ENCODE measurements at regions of chr6 and their contacts with region 1.

Region 1: GRCh38 chr6:132530293-132530974 is 7.6 kb upstream of the TAAR9 start:
- DNase-seq: peak; percentile 38
- H3K4me3 ChIP-seq: peak overlapping the region; percentile 30 to 45 (median 39)
- H3K27ac ChIP-seq: no peak overlapping the region
- H3K4me1 ChIP-seq: no peaks in the 10 kb centered on the region
- H3K27me3 ChIP-seq: no peaks in the 10 kb centered on the region
- CTCF ChIP-seq: peak; percentile 52 to 76

Region 2: GRCh38 chr6:131476362-131476761 is 1054.1 kb before region 1 on chr6:
- CTCF ChIA-PET with region 1: no interaction called
- dilution Hi-C with region 1: no loop called
- in situ Hi-C with region 1: no loop called
- intact Hi-C with region 1: no loop called
- DNase-seq: no peak
- H3K4me3 ChIP-seq: no peak overlapping the region
- H3K27ac ChIP-seq: no peak overlapping the region
- H3K4me1 ChIP-seq: no peaks in the 10 kb centered on the region
- H3K27me3 ChIP-seq: no peaks in the 10 kb centered on the region
- CTCF ChIP-seq: no peak

Region 3: GRCh38 chr6:132669690-132670291 is 139.4 kb after region 1 on chr6:
- CTCF ChIA-PET with region 1: no interaction called
- dilution Hi-C with region 1: no loop called
- in situ Hi-C with region 1: no loop called
- intact Hi-C with region 1: loop called (anchors 1 kb)
- DNase-seq: peak; percentile 21
- H3K4me3 ChIP-seq: no peak overlapping the region
- H3K27ac ChIP-seq: no peak overlapping the region
- H3K4me1 ChIP-seq: no peaks in the 10 kb centered on the region
- H3K27me3 ChIP-seq: no peaks in the 10 kb centered on the region
- CTCF ChIP-seq: peak; percentile 44 to 45

Region 4: GRCh38 chr6:132715204-132715603 is 184.8 kb after region 1 on chr6:
- CTCF ChIA-PET with region 1: interaction called, 3 read pairs
- dilution Hi-C with region 1: no loop called
- in situ Hi-C with region 1: loop called in 1 of 2 experiments (anchors 25 kb)
- intact Hi-C with region 1: loop called (anchors 1 kb)
- DNase-seq: peak; percentile 64
- H3K4me3 ChIP-seq: no peak overlapping the region
- H3K27ac ChIP-seq: no peak overlapping the region
- H3K4me1 ChIP-seq: no peaks in the 10 kb centered on the region
- H3K27me3 ChIP-seq: no peaks in the 10 kb centered on the region
- CTCF ChIP-seq: peak; percentile 69 to 78

Region 5: GRCh38 chr6:132768051-132768517 is 237.7 kb after region 1 on chr6:
- CTCF ChIA-PET with region 1: no interaction called
- dilution Hi-C with region 1: no loop called
- in situ Hi-C with region 1: loop called in 1 of 2 experiments (anchors 10 kb)
- intact Hi-C with region 1: loop called (anchors 1 kb)
- DNase-seq: peak; percentile 43
- H3K4me3 ChIP-seq: no peak overlapping the region
- H3K27ac ChIP-seq: no peak overlapping the region
- H3K4me1 ChIP-seq: peaks cover 13% of the 10 kb centered on the region
- H3K27me3 ChIP-seq: no peaks in the 10 kb centered on the region
- CTCF ChIP-seq: peak; percentile 40 to 47

Region 6: GRCh38 chr6:132798869-132799538 is 268.6 kb after region 1 on chr6:
- CTCF ChIA-PET with region 1: interaction called, 3 read pairs
- dilution Hi-C with region 1: no loop called
- in situ Hi-C with region 1: loop called in 1 of 2 experiments (anchors 25 kb)
- intact Hi-C with region 1: loop called (anchors 1 kb)
- DNase-seq: peak; percentile 72
- H3K4me3 ChIP-seq: peak overlapping the region; percentile 77 to 92 (median 91)
- H3K27ac ChIP-seq: no peak overlapping the region
- H3K4me1 ChIP-seq: no peaks in the 10 kb centered on the region
- H3K27me3 ChIP-seq: no peaks in the 10 kb centered on the region
- CTCF ChIP-seq: peak; percentile 89 to 95

Region 7: DNA sequence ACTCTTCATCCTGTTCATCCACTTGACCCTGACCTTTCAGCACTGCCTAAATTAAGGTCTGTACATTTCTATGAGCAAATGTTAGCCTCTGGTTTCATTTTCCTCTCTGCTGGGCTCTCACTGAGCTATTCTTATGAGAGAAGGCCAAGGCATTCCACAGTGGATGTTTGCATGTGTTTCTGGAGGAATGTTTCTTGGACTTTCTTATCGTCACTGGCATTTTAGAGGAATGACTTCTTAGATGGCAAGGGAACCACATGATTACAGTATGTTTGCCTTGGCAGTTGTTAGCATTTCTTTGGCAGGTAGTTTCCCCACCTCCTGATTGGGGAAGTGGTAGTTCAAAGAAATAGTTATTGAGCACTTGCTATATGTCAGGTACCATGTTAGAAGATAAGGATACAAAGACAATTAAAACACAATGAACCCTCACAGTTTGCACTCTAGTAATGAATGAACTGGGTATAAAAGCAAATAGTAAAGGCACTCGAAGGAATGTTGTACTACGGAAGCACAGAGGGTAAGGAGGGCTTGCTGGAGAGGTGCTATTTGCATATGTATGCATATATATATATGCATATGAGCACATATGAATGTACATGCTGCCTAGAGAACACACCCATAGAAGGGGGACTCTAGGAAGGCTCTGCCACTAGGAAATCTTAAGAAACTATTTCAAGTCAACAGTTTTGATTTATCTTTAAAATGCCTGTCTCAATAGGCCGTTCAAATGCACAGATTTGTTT is 1018.2 kb after region 1 on chr6:
- CTCF ChIA-PET with region 1: no interaction called
- dilution Hi-C with region 1: no loop called
- in situ Hi-C with region 1: loop called in 1 of 2 experiments (anchors 25 kb)
- intact Hi-C with region 1: no loop called
- DNase-seq: no peak
- H3K4me3 ChIP-seq: no peak overlapping the region
- H3K27ac ChIP-seq: no peak overlapping the region
- H3K4me1 ChIP-seq: no peaks in the 10 kb centered on the region
- H3K27me3 ChIP-seq: peaks cover 6% of the 10 kb centered on the region
- CTCF ChIP-seq: no peak